ENCODE measurements at regions of chr14 and their contacts with region 1.

Region 1: GRCh38 chr14:31207755-31208545 is at the start of gene HECTD1:
- DNase-seq: peak in 8 of 9 donors; percentile 89 to 94 (median 92)
- ATAC-seq: peak; percentile 83
- H3K4me3 ChIP-seq: peak within 1 kb of the TSS; percentile 70
- H3K4me3 Mint-ChIP-seq: peak within 1 kb of the TSS; percentile 93 to 98 (median 96)
- H3K27ac ChIP-seq: peak within 1 kb of the TSS; percentile 100
- H3K27ac Mint-ChIP-seq: peak within 1 kb of the TSS; percentile 99 to 100 (median 99)
- H3K4me1 ChIP-seq: peaks cover 30 to 33% of the 10 kb centered on the region in 2 donors
- H3K4me1 Mint-ChIP-seq: peaks cover 33 to 68% (median 62%) of the 10 kb centered on the region in 7 donors
- H3K27me3 ChIP-seq: no peaks in the 10 kb centered on the region
- H3K27me3 Mint-ChIP-seq: no peaks in the 10 kb centered on the region
- total RNA-seq, gene HECTD1: 115 to 163 (median 158) TPM

Region 2: GRCh38 chr14:31026395-31027118 is 181.4 kb before region 1 on chr14:
- CTCF ChIA-PET with region 1: no interaction called
- POLR2A ChIA-PET with region 1: interaction called, 33 read pairs
- intact Hi-C with region 1: loop called (anchors 1 kb)
- DNase-seq: peak; percentile 74 to 93 (median 80)
- ATAC-seq: peak; percentile 97
- H3K4me3 ChIP-seq: peak overlapping the region; percentile 84
- H3K4me3 Mint-ChIP-seq: peak overlapping the region; percentile 86 to 100 (median 96)
- H3K27ac ChIP-seq: peak overlapping the region; percentile 91
- H3K27ac Mint-ChIP-seq: peak overlapping the region; percentile 89 to 98 (median 96)
- H3K4me1 ChIP-seq: no peaks in the 10 kb centered on the region
- H3K4me1 Mint-ChIP-seq: peaks cover 38 to 62% (median 49%) of the 10 kb centered on the region in 7 donors
- H3K27me3 ChIP-seq: no peaks in the 10 kb centered on the region
- H3K27me3 Mint-ChIP-seq: no peaks in the 10 kb centered on the region

Region 3: DNA sequence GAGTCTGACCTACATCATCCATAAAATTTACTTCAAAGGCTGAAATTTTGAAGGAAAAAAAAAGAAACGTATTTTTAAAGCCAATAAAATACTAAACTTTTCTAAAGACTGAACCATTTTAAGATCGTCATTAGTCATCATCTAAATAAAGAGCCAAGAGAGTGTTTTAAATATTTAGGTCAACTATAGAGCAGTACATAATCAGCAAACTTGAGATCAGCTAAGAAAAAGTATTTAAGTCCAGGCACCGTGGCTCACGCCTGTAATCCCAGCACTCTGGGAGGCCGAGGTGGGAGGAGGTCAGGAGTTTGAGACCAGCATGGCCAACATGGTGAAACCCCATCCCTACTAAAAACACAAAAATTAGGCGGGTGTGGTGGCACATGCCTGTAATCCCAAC is 35.9 kb before region 1 on chr14:
- CTCF ChIA-PET with region 1: no interaction called
- POLR2A ChIA-PET with region 1: interaction called, 5 read pairs
- intact Hi-C with region 1: loop called in 1 of 2 experiments (anchors 5 kb)
- DNase-seq: no peak
- ATAC-seq: no peak
- H3K4me3 ChIP-seq: no peak overlapping the region
- H3K4me3 Mint-ChIP-seq: no peak overlapping the region
- H3K27ac ChIP-seq: no peak overlapping the region
- H3K27ac Mint-ChIP-seq: no peak overlapping the region
- H3K4me1 ChIP-seq: no peaks in the 10 kb centered on the region
- H3K4me1 Mint-ChIP-seq: peaks cover 0 to 8% (median 3%) of the 10 kb centered on the region in 7 donors
- H3K27me3 ChIP-seq: no peaks in the 10 kb centered on the region
- H3K27me3 Mint-ChIP-seq: no peaks in the 10 kb centered on the region

Region 4: DNA sequence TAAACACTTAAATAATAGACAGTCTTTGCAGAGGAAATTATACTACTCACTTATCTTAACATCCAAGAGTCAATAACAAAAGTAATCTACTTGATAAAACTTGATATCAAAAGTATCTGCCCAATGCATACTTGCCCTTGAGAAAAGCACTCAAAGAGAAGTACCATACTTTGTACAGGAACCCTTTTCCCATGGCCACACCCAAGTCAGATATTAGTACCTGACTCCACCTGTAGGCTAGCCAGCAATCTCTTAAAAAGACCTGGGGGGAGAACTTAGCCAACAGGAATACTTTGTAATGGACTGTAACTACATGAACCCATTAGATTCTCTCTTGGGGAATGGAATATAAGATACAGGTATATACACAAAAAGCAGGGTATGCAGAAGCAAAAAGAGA is 99.2 kb after region 1 on chr14:
- CTCF ChIA-PET with region 1: interaction called, 3 read pairs
- POLR2A ChIA-PET with region 1: no interaction called
- intact Hi-C with region 1: loop called in 1 of 2 experiments (anchors 5 kb)
- DNase-seq: no peak
- ATAC-seq: no peak
- H3K4me3 ChIP-seq: no peak overlapping the region
- H3K4me3 Mint-ChIP-seq: no peak overlapping the region
- H3K27ac ChIP-seq: no peak overlapping the region
- H3K27ac Mint-ChIP-seq: no peak overlapping the region
- H3K4me1 ChIP-seq: no peaks in the 10 kb centered on the region
- H3K4me1 Mint-ChIP-seq: peaks cover 0 to 6% (median 0%) of the 10 kb centered on the region in 7 donors
- H3K27me3 ChIP-seq: no peaks in the 10 kb centered on the region
- H3K27me3 Mint-ChIP-seq: no peaks in the 10 kb centered on the region

Region 5: GRCh38 chr14:31420319-31421111 is 212.6 kb after region 1 on chr14 and contains the start of gene HEATR5A:
- CTCF ChIA-PET with region 1: no interaction called
- POLR2A ChIA-PET with region 1: interaction called, 20 read pairs
- intact Hi-C with region 1: loop called (anchors 1 kb)
- DNase-seq: peak; percentile 84 to 93 (median 90)
- ATAC-seq: peak; percentile 99
- H3K4me3 ChIP-seq: peak within 1 kb of the TSS; percentile 99
- H3K4me3 Mint-ChIP-seq: peak within 1 kb of the TSS; percentile 94 to 99 (median 98)
- H3K27ac ChIP-seq: peak within 1 kb of the TSS; percentile 83
- H3K27ac Mint-ChIP-seq: peak within 1 kb of the TSS; percentile 82 to 97 (median 92)
- H3K4me1 ChIP-seq: peaks cover 6 to 8% of the 10 kb centered on the region in 2 donors
- H3K4me1 Mint-ChIP-seq: peaks cover 20 to 35% (median 25%) of the 10 kb centered on the region in 7 donors
- H3K27me3 ChIP-seq: no peaks in the 10 kb centered on the region
- H3K27me3 Mint-ChIP-seq: peaks cover 0 to 7% (median 0%) of the 10 kb centered on the region in 5 donors
- total RNA-seq, gene HEATR5A: 7.7 to 14.4 (median 13.2) TPM

Region 6: DNA sequence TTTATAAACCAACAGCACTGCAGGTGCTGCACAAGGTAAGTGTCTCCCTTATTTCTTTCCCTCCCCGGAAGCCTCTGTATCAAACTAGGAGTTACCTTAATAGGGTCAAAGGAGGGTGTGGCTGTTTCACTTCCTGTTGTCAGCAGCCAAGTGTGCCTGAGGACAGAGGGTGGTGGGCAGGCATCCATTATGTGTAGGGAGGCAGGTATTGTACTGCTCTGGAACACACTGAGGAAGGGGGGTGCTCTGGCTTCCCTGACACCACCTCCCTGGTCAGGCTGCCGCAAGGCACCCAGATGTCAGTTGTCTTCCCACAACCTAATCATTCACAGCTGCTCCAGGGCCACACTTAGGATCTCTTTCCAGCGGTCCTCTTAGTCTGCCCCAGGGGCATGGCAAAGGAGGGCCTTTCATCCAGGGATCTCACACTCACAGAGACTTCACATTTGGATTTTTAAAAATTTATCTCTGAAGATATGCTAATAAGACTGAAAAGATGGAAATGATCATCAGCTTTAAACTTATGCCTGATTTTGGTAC is 737.2 kb after region 1 on chr14:
- CTCF ChIA-PET with region 1: no interaction called
- POLR2A ChIA-PET with region 1: no interaction called
- intact Hi-C with region 1: loop called in 1 of 2 experiments (anchors 10 kb)
- DNase-seq: peak in 8 of 9 donors; percentile 7 to 75 (median 48)
- ATAC-seq: peak; percentile 83
- H3K4me3 ChIP-seq: peak overlapping the region; percentile 29
- H3K4me3 Mint-ChIP-seq: peak overlapping the region in 9 of 10 donors; percentile 30 to 84 (median 71)
- H3K27ac ChIP-seq: peak overlapping the region; percentile 56
- H3K27ac Mint-ChIP-seq: peak overlapping the region; percentile 62 to 94 (median 90)
- H3K4me1 ChIP-seq: peaks cover 10 to 28% of the 10 kb centered on the region in 2 donors
- H3K4me1 Mint-ChIP-seq: peaks cover 21 to 64% (median 33%) of the 10 kb centered on the region in 7 donors
- H3K27me3 ChIP-seq: no peaks in the 10 kb centered on the region
- H3K27me3 Mint-ChIP-seq: peaks cover 0 to 4% (median 0%) of the 10 kb centered on the region in 5 donors

Measured in naive thymus-derived CD4-positive, alpha-beta T cell (primary cell).